Ovary (tissue), 10 donors: ENCODE measurements at regions of chr1 and their contacts with region 1.

Region 1: DNA sequence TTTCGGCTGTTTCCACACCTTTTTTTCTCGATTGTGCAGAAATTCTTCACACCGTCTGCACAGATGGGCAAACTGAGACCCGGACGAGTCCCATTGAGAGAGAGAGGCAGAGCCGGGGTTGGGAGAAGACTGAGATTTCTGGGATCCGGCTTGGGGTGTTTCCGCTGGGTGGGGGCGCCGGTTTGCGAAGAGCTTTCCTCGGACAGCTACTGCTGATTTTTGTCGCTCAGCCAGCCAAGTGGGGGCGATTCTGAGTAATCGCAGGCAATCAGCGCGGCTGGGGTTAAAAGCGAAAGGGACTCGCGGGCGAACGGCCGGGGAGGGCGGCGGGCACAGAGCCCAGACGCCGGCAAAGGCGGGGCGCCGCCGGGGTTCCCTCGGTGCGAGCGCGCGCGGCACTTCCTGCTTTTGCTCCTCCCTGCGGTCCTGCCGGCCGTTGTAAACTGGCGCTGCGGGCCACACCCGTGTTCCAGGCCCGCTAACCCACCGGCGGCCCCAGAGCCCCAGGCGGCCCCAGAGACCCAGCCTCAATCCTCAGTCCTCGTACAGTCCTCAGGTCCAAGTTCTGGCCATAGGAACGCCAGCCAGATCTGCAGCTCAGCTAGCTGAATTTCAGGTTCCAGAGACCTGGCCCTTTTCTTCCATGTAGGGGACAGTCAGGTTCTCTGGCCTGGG is 32.4 kb upstream of the JUN start:
- DNase-seq: peak; percentile 89 to 94 (median 90)
- H3K4me3 ChIP-seq: peak overlapping the region; percentile 68
- H3K27ac ChIP-seq: peak overlapping the region; percentile 71 to 79
- H3K4me1 ChIP-seq: peaks cover 8% of the 10 kb centered on the region
- H3K27me3 ChIP-seq: no peaks in the 10 kb centered on the region
- CTCF ChIP-seq: no peak
- EP300 ChIP-seq: no peak
- POLR2A ChIP-seq: peak; percentile 16

Region 2: DNA sequence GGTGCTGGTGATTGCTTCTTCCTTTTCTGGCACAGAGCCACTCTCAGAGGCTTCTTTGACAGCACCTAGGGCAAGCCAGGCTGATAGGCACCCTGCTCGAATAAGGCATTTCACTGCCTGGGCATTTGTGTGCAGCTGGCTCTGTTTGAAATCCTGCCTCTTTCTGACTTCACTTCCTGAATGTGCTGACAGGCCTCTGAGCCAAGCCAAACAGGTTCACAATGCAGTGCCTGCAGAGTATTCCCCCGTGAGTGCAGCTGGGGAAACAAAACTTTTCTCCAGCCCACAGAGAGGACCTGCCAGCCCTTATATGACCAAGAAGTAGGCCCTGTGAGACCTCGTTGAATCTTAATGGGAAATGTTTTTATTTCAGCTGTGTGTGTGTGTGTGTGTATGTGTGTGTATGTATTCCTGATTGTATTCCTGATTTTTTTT is 42.8 kb before region 1 on chr1:
- intact Hi-C with region 1: no loop called
- DNase-seq: peak in 2 of 5 donors; percentile 27 to 30
- H3K4me3 ChIP-seq: no peak overlapping the region
- H3K27ac ChIP-seq: no peak overlapping the region
- H3K4me1 ChIP-seq: no peaks in the 10 kb centered on the region
- H3K27me3 ChIP-seq: no peaks in the 10 kb centered on the region
- CTCF ChIP-seq: no peak
- EP300 ChIP-seq: no peak
- POLR2A ChIP-seq: no peak

Region 3: GRCh38 chr1:58883037-58883887 is 67.1 kb after region 1 on chr1:
- intact Hi-C with region 1: loop called in 1 of 4 experiments (anchors 10 kb)
- DNase-seq: peak in 4 of 5 donors; percentile 59 to 75 (median 63)
- H3K4me3 ChIP-seq: no peak overlapping the region
- H3K27ac ChIP-seq: no peak overlapping the region
- H3K4me1 ChIP-seq: peaks cover 13% of the 10 kb centered on the region
- H3K27me3 ChIP-seq: no peaks in the 10 kb centered on the region
- CTCF ChIP-seq: no peak
- EP300 ChIP-seq: no peak
- POLR2A ChIP-seq: no peak

Region 4: DNA sequence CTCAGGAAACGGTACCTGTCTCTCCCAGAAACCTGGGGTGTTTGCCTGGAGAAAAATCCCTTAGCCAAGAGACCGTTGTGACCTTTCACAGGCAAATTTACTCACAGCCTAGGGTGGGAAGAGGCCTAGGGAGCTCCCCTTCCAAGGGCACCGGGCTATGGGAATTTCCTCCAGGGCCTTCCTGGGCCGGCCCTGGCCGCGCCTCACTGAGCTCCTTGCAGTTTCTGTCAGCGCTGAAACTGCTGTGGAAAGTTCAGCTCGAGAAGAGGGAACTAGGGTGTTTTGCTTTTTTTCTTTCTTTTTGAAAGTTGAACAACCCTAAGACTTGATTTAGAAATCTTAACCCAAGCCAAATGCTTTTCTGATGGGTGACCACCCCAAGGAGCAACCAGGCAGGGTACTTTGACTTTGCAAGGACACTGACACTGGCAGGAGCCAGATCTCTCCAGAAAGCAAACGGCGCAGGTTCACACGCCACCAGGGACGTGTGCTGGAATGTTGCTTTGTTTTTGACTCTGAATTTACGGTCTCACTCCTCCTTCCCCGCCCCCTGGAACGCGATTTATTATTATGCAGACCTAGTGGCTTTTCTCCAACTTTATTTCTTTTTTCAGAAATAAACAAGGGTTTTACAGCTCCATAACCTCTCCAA is 197.2 kb after region 1 on chr1:
- intact Hi-C with region 1: loop called in 1 of 4 experiments (anchors 10 kb)
- DNase-seq: peak; percentile 52 to 70 (median 55)
- H3K4me3 ChIP-seq: peak overlapping the region; percentile 22
- H3K27ac ChIP-seq: peak overlapping the region; percentile 81 to 82
- H3K4me1 ChIP-seq: peaks cover 11% of the 10 kb centered on the region
- H3K27me3 ChIP-seq: no peaks in the 10 kb centered on the region
- CTCF ChIP-seq: no peak
- EP300 ChIP-seq: no peak
- POLR2A ChIP-seq: no peak